ENCODE measurements at regions of chr12 and their contacts with region 1.

Region 1: DNA sequence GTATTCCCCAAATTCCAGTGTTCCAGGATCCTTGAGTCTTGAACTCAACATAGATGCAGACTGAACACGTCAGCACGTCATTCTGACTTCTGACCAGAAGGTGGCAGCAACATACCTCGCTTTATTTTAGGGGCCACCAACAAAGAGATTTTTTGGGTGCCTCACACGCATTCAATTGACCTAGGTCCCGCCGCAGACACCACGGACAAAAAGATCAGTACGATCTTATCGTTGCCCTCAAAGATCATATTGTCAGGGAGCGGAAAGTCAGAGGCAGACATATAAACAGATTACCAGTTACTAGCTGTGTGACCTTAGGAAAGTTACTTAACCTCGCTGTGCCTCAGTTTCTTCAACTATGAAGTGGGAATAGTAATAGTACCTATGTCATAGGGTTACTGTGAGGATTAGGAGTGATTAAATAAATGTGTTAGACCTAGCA is 6.5 kb upstream of the PRPH start:
- DNase-seq: no peak
- ATAC-seq: peak in 1 of 2 donors; percentile 56
- H3K4me3 ChIP-seq: no peak overlapping the region
- H3K27ac ChIP-seq: no peak overlapping the region
- H3K4me1 ChIP-seq: no peaks in the 10 kb centered on the region
- H3K27me3 ChIP-seq: peaks cover 9 to 10% (median 10%) of the 10 kb centered on the region in 3 donors
- CTCF ChIP-seq: peak; percentile 61 to 80 (median 75)
- POLR2A ChIP-seq: no peak

Region 2: GRCh38 chr12:48910196-48910595 is 378.2 kb before region 1 on chr12:
- in situ Hi-C with region 1: no loop called
- intact Hi-C with region 1: no loop called
- DNase-seq: no peak
- ATAC-seq: no peak
- H3K4me3 ChIP-seq: no peak overlapping the region
- H3K27ac ChIP-seq: no peak overlapping the region
- H3K4me1 ChIP-seq: no peaks in the 10 kb centered on the region
- H3K27me3 ChIP-seq: no peaks in the 10 kb centered on the region
- CTCF ChIP-seq: no peak
- POLR2A ChIP-seq: no peak

Region 3: GRCh38 chr12:49121047-49121696 is 167.3 kb before region 1 on chr12:
- in situ Hi-C with region 1: no loop called
- intact Hi-C with region 1: no loop called
- DNase-seq: peak; percentile 31 to 45
- ATAC-seq: peak; percentile 88 to 94
- H3K4me3 ChIP-seq: no peak overlapping the region
- H3K27ac ChIP-seq: no peak overlapping the region
- H3K4me1 ChIP-seq: no peaks in the 10 kb centered on the region
- H3K27me3 ChIP-seq: no peaks in the 10 kb centered on the region
- CTCF ChIP-seq: peak; percentile 44 to 67 (median 62)
- POLR2A ChIP-seq: no peak

Region 4: DNA sequence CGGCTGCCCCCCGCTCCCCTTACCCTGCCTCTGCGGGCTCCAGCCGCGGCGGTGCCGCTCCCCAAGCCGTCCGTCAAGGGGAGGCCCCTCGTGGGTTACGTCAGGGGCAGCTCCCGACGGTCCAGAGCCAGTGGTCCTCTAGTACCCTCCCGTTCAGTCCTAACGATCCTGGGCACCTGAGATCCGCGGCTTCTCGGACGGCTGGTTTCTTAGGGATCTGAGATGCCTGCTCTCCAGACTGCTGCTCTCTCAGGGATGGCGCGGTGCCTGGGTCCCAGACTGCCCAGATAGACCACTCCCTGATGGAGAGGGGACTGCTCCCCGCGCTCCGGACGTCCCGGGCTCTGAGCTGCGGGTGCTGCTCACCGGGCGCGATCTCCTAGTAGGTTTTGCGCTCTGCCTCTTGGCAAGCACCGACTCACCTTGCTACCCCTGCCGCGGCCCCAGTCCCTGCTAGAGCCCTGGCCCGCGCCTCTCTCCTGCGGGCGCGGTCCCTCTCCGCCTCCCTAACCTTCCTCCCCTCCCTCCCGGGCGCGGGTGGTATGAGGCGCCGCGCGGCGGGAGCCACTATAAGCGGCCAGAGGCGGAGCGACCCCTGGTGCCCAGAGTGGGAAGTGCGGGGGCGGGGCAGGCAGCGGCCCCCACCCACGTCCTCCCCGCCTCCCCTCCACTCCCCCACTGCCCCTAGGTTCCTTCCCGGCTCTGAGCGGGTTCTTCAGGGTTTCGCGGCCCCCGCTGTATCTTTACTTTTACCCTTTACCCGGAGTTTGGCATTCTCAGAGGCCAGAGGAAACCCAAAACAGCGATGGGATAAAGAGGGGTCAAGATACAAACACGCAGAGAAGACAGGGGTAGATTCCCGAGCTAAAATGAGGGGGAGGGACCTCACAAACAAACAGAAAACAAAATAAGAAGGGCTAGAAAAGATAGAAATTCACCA is 48.5 kb after region 1 on chr12 and contains the start of gene C1QL4:
- in situ Hi-C with region 1: loop called in 1 of 4 experiments (anchors 5 kb)
- intact Hi-C with region 1: loop called (anchors 1 kb)
- DNase-seq: peak; percentile 34 to 55
- ATAC-seq: peak; percentile 82 to 85
- H3K4me3 ChIP-seq: peak within 1 kb of the TSS; percentile 35 to 62 (median 48)
- H3K27ac ChIP-seq: no peak within 1 kb of the TSS
- H3K4me1 ChIP-seq: peaks cover 0 to under 1% of the 10 kb centered on the region in 2 donors
- H3K27me3 ChIP-seq: peaks cover 53 to 71% (median 58%) of the 10 kb centered on the region in 3 donors
- CTCF ChIP-seq: peak; percentile 42 to 99 (median 76)
- POLR2A ChIP-seq: no peak
- total RNA-seq, gene C1QL4: not detected